Common myeloid progenitor, CD34-positive (primary cell): ENCODE measurements at regions of chr4 and their contacts with region 1.

Region 1: GRCh38 chr4:15882675-15883086 is 55.9 kb downstream of the FGFBP1 start:
- DNase-seq: peak; percentile 74 to 87 (median 84)
- H3K4me3 ChIP-seq: no peak overlapping the region
- H3K27ac ChIP-seq: no peak overlapping the region
- H3K4me1 ChIP-seq: no peaks in the 10 kb centered on the region
- H3K27me3 ChIP-seq: peaks cover 0 to 2% (median 0%) of the 10 kb centered on the region in 5 experiments

Region 2: DNA sequence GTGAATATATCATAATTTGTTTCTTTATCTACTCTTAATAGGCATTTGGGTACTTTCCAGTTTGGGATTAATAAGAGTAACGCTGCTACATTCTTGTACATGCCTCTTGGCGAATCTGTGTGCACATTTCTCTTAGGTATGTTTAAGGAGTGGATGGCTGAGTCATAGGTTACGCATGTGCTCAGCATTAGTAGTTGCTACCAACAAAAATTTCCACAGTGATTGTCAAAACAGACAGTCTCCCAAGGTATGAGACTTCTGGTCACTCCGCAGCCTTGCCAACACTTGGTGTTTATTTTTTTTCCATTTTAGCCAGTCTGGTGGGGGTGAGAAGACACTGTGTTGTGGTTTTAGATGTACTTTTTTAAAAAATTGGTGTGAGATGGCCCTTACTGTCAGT is 11.3 kb after region 1 on chr4:
- CTCF ChIA-PET with region 1: interaction called, 14 read pairs
- POLR2A ChIA-PET with region 1: no interaction called
- DNase-seq: no peak
- H3K4me3 ChIP-seq: no peak overlapping the region
- H3K27ac ChIP-seq: no peak overlapping the region
- H3K4me1 ChIP-seq: peaks cover 3 to 6% (median 5%) of the 10 kb centered on the region in 4 experiments
- H3K27me3 ChIP-seq: no peaks in the 10 kb centered on the region

Region 3: GRCh38 chr4:15956179-15956850 is 73.6 kb after region 1 on chr4:
- CTCF ChIA-PET with region 1: interaction called, 109 read pairs
- POLR2A ChIA-PET with region 1: no interaction called
- DNase-seq: peak; percentile 82 to 94 (median 91)
- H3K4me3 ChIP-seq: no peak overlapping the region
- H3K27ac ChIP-seq: no peak overlapping the region
- H3K4me1 ChIP-seq: peaks cover 0 to 2% (median 0%) of the 10 kb centered on the region in 4 experiments
- H3K27me3 ChIP-seq: no peaks in the 10 kb centered on the region

Region 4: GRCh38 chr4:15963001-15963451 is 80.3 kb after region 1 on chr4 and contains the start of gene FGFBP2:
- CTCF ChIA-PET with region 1: interaction called, 25 read pairs
- POLR2A ChIA-PET with region 1: no interaction called
- DNase-seq: peak; percentile 71 to 88 (median 84)
- H3K4me3 ChIP-seq: peak within 1 kb of the TSS in 2 of 7 experiments; percentile 23 to 46
- H3K27ac ChIP-seq: no peak within 1 kb of the TSS
- H3K4me1 ChIP-seq: peaks cover 5 to 15% (median 10%) of the 10 kb centered on the region in 4 experiments
- H3K27me3 ChIP-seq: no peaks in the 10 kb centered on the region